Caco-2 (cell line): ENCODE measurements at regions of chr1 and their contacts with region 1.

Region 1: DNA sequence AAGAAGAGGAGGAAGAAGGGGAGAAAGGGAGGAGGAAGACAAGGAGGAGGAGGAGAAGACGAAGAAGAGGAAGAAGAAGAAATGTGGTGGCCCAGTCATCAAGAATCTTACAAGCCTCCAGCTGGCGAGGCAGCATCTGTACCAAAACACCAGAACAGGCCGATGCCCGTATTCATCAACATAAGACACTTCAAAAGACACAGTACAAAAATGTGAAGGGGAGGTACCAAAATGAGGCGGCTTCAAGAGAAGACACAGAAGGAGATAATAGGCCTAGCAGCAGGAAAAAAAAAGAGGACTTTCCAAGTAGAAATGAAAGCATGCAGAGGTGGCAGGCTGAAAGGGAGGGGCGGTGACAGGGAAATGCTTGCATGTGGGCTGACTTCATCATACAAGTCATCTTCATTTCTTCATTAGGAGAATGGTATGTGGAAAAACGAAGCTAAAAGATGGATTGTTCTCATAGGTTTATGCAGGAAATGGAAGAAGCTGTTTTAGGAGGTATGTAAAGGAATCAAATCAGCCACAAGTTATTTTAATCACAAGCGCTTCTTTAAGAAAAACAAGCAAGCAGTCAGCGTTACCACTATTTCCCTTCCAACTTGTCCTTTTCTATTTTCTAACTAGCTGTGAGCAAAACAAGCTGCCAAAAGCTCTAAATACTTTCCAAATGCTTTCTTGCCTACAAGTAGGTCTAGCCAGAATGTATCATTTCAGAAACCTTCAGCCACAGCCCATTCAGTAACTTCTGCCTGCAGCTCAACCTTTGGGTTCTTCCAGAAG is 192.3 kb downstream of the SLC45A1 start:
- DNase-seq: no peak
- H3K4me3 ChIP-seq: no peak overlapping the region
- H3K4me3 Mint-ChIP-seq: no peak overlapping the region
- H3K27ac Mint-ChIP-seq: no peak overlapping the region
- H3K4me1 ChIP-seq: no peaks in the 10 kb centered on the region
- H3K4me1 Mint-ChIP-seq: peaks cover 10% of the 10 kb centered on the region
- H3K27me3 ChIP-seq: no peaks in the 10 kb centered on the region
- H3K27me3 Mint-ChIP-seq: no peaks in the 10 kb centered on the region
- CTCF ChIP-seq: no peak

Region 2: DNA sequence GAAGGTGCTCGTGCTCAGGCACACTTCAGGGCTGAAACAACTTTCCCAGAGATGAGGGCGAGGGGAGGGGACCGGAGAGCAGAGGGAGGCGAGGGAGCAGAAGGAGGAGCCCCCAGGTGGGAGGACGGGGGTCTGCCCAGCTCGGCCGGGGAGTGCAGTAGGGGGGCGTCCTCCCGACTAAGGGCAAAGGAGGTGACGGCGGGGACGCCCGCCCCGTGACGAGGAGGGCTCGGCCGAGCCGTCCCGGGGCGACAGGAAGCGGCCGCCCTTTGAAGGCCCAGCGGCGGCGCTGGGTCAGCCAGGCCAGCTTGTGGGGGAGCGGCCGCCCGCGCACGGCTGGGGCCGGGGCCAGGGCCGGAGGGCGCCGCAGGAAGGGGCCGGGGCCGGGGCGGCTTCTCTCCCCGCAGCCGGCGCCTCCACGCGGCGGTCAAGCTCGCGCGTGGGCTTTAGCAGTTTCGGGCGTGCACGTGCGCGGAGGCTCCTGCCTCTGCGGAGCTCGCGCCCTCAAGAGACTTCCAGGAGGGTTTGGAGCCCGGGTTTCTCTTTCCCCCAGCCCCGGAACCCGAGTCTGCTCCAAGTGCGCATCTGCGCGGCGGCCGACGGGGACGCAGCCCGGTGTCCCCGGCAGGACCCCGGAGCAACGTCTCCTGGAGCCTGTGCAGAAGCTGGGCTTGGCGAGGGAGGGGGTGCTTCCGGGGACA is 293.1 kb before region 1 on chr1:
- CTCF ChIA-PET with region 1: no interaction called
- POLR2A ChIA-PET with region 1: interaction called, 14 read pairs
- intact Hi-C with region 1: no loop called
- DNase-seq: no peak
- H3K4me3 ChIP-seq: no peak overlapping the region
- H3K4me3 Mint-ChIP-seq: no peak overlapping the region
- H3K27ac Mint-ChIP-seq: no peak overlapping the region
- H3K4me1 ChIP-seq: peaks cover 8% of the 10 kb centered on the region; the same call in 1 of the 2 replicates
- H3K4me1 Mint-ChIP-seq: peaks cover 10% of the 10 kb centered on the region
- H3K27me3 ChIP-seq: no peaks in the 10 kb centered on the region
- H3K27me3 Mint-ChIP-seq: no peaks in the 10 kb centered on the region
- CTCF ChIP-seq: no peak

Region 3: DNA sequence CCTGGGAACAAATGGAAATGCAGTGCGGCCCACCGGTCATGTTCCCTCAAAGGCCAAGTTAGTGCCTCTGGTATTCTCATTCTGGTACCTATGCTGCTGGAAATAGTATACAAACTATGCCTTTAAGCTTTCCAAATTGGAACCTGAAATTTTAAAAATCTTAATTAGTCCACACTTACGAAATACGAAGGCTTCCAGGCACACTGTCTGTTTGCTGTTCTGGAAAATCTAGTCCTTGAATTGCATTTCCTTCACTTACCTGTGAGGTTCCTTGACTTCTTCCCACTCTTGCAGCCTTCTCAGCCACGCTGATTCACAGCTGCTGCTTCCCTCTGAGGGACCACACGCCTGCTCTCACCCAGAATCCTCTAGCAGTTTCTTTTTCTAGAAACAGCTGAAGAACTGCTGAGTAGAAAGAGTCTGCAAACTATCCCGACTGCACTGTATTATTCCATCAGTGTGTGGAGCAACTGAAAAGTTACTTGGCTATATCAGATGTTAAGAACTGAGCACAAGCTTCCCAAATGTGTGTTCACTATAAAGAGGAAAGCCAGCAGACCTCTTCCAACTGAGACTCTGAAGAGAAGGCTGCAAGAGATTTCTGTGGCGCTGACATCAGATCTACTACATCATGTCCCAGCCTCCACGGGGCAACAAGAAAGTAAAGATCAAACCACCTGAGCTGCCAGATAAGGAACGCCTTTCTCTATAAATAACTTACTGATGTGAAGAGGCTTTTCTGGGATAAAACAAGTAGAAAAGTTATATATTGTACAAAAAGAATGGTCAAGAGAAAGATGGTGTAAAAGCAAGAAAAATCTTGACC is 80.5 kb after region 1 on chr1:
- CTCF ChIA-PET with region 1: no interaction called
- POLR2A ChIA-PET with region 1: no interaction called
- intact Hi-C with region 1: no loop called
- DNase-seq: no peak
- H3K4me3 ChIP-seq: no peak overlapping the region
- H3K4me3 Mint-ChIP-seq: no peak overlapping the region
- H3K27ac Mint-ChIP-seq: peak overlapping the region; percentile 61
- H3K4me1 ChIP-seq: 0 out of 2 replicates have a peak, but pooled peaks cover 3% of the 10 kb centered on the region
- H3K4me1 Mint-ChIP-seq: peaks cover 24% of the 10 kb centered on the region
- H3K27me3 ChIP-seq: no peaks in the 10 kb centered on the region
- H3K27me3 Mint-ChIP-seq: no peaks in the 10 kb centered on the region
- CTCF ChIP-seq: no peak